PC-9 (cell line): ENCODE measurements at regions of chr9 and their contacts with region 1.

Region 1: DNA sequence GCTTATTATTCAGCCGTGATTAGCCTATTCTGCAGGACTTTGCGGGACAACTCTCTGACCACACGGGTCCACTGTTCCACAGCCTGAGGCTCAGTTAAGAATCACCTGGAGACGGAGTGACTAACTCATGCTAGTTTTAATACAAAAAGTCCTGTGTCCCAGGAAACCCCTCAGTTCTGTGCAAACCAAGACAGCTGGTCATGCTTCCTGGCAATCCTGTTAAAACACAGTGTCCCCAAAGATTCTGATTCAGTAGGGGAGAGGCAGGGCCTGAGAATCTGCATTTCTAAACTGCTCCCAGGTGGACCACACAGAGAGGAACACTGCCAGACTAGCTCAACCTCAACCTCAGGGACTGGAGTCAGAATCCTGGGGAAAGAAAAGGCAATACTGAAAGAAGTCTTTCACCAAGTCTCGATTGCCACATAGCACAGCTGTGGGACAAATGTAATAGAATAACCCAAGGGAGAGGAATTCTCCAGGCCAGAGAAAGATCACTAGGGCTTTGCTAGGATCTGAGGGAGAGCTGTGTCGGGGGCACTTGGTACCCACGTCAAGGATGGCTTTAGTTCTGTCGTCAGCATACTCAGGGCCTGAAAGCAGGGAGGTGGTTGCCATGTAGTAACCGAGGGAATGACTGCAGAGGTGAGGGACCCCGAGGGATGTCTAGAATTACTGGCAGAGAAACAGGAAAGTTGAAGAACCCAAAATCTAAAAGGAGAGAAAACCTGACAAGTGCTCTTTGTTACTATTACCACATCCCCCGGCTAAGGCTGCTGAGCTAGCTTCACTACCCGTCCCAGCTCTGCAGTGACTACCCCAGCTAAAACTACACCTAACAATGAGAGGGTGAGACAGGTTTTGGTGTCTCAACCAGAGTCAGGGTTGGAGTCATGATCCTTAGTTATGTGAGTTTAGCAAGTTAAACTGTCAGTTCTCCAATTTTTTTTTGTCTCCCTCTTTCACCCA is 8.6 kb downstream of the SUSD1 start:
- DNase-seq: peak; percentile 61 to 83
- H3K4me3 ChIP-seq: no peak overlapping the region
- H3K27ac ChIP-seq: peak overlapping the region; percentile 70
- H3K4me1 ChIP-seq: peaks cover 60% of the 10 kb centered on the region
- H3K27me3 ChIP-seq: no peaks in the 10 kb centered on the region
- CTCF ChIP-seq: no peak; the same call in 1 of the 2 replicates

Region 2: DNA sequence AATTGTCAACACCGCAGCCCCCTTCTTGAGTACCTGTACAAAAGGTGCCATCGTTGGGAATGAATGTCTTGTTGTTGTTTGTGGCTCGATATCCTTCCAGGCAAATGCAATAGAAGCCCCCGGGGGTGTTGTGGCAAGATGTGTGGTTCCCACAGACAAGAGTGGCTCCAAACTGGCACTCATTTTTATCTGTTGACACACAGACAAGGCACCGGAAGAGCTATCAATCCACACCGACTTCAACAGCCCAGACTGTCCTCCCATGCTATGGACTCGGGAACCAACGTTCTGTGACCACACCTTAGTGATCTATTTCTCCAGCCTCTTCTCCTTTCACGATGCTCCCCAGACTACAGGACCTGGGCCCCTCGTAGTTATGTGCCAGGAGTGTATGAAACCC is 17.2 kb before region 1 on chr9:
- CTCF ChIA-PET with region 1: interaction called, 14 read pairs
- POLR2A ChIA-PET with region 1: interaction called, 8 read pairs
- intact Hi-C with region 1: no loop called
- DNase-seq: no peak
- H3K4me3 ChIP-seq: no peak overlapping the region
- H3K27ac ChIP-seq: no peak overlapping the region
- H3K4me1 ChIP-seq: peaks cover 42% of the 10 kb centered on the region
- H3K27me3 ChIP-seq: no peaks in the 10 kb centered on the region
- CTCF ChIP-seq: no peak

Region 3: DNA sequence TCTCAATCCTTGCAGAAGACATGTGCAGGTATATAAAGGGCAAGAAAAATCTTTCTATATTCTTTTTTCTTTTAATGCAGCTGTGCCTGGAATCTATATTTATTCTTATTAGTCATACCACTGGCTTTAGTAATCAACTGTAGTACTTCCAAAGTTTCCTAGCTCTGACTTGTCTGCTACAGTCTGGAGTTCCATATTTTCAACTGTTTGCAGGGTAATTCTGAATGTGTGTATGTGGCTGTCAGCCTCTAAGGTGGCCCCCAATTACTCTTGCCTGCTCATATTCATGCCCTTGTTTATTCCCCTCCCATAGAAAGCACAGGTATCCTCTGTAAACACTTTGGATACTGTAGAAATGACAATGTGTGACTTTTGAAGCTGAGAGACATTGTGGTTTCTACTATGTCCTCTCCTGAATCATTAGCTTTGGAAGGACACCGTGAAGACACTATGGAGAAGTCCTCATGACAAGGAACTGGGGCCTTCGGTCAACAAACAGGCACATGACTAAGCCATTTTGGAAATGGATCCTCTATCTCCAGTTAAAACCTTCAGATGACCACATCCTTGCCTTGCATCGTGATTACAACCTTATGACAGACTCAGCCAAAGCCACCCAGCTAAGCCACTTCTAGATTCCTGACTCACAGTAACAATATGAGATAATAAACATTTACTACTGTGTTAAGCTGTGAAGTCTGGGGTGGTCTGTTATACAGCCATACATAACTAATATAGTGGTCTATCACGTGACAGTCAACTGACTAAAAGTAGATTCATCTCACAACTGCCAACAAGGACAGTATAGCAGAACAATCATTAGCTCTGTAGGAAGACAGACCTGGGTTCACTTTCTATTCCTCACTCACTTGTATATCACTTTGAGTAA is 58.2 kb after region 1 on chr9:
- CTCF ChIA-PET with region 1: interaction called, 4 read pairs
- POLR2A ChIA-PET with region 1: no interaction called
- intact Hi-C with region 1: loop called (anchors 5 kb)
- DNase-seq: no peak
- H3K4me3 ChIP-seq: no peak overlapping the region
- H3K27ac ChIP-seq: peak overlapping the region; percentile 28; the same call in 1 of the 2 replicates
- H3K4me1 ChIP-seq: no peaks in the 10 kb centered on the region
- H3K27me3 ChIP-seq: no peaks in the 10 kb centered on the region
- CTCF ChIP-seq: no peak

Region 4: DNA sequence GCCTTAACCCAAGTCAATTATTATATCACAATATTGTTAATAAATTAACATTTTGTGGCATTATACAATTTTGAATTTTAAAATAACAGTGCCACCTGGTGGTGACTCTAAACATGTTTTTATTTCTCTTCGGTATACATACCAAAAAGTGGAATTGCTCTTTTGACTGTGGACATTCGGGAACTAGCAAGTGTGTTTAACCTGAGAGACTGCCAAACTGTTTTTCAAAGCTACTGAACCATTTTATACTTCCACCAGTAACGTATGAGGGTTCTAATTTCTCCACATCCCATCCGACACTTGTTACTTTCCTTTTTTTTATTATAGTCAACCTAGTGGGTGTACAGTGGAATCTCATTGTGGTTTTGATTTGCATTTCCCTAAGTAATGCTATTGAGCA is 195.1 kb after region 1 on chr9:
- CTCF ChIA-PET with region 1: no interaction called
- POLR2A ChIA-PET with region 1: no interaction called
- intact Hi-C with region 1: loop called (anchors 1 kb)
- DNase-seq: peak in 1 of 2 experiments; percentile 53
- H3K4me3 ChIP-seq: no peak overlapping the region
- H3K27ac ChIP-seq: no peak overlapping the region
- H3K4me1 ChIP-seq: peaks cover 11% of the 10 kb centered on the region; the same call in 1 of the 2 replicates
- H3K27me3 ChIP-seq: no peaks in the 10 kb centered on the region
- CTCF ChIP-seq: peak; percentile 78

Region 5: DNA sequence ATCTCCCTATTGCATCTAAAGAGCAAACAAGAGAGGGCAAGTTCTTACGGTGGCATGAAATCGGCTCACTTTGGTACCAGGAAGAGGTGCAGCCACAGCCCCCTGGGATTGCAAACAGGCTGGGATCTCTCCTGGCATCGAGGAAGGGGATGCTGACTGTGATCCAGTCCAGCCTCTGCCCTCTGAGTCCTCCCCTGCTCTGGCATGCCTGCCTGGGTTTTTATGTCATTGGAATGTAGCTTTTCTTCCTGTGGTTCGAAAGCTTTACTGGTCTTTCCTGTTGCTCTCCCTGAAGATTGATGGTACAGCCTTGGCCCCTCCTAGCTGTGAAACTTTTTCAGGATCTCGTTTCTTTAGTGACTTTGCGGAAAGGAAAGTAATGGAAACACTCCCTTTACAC is 717.6 kb after region 1 on chr9:
- CTCF ChIA-PET with region 1: no interaction called
- POLR2A ChIA-PET with region 1: interaction called, 14 read pairs
- intact Hi-C with region 1: no loop called
- DNase-seq: peak; percentile 69 to 80
- H3K4me3 ChIP-seq: no peak overlapping the region
- H3K27ac ChIP-seq: no peak overlapping the region
- H3K4me1 ChIP-seq: peaks cover 9% of the 10 kb centered on the region; the same call in 1 of the 2 replicates
- H3K27me3 ChIP-seq: no peaks in the 10 kb centered on the region
- CTCF ChIP-seq: no peak